HCT116 (cell line): ENCODE measurements at regions of chr20 and their contacts with region 1.

Region 1: GRCh38 chr20:8722276-8722928 is 346.5 kb upstream of the PLCB4 start:
- DNase-seq: peak; percentile 59
- ATAC-seq: peak; percentile 91
- H3K4me3 ChIP-seq: no peak overlapping the region
- H3K27ac ChIP-seq: no peak overlapping the region
- H3K4me1 ChIP-seq: no peaks in the 10 kb centered on the region
- H3K27me3 ChIP-seq: no peaks in the 10 kb centered on the region
- CTCF ChIP-seq: peak; percentile 52 to 83 (median 71); a peak in 5 of 6 replicates
- POLR2A ChIP-seq: no peak
- RAD21 ChIP-seq: peak; percentile 82

Region 2: DNA sequence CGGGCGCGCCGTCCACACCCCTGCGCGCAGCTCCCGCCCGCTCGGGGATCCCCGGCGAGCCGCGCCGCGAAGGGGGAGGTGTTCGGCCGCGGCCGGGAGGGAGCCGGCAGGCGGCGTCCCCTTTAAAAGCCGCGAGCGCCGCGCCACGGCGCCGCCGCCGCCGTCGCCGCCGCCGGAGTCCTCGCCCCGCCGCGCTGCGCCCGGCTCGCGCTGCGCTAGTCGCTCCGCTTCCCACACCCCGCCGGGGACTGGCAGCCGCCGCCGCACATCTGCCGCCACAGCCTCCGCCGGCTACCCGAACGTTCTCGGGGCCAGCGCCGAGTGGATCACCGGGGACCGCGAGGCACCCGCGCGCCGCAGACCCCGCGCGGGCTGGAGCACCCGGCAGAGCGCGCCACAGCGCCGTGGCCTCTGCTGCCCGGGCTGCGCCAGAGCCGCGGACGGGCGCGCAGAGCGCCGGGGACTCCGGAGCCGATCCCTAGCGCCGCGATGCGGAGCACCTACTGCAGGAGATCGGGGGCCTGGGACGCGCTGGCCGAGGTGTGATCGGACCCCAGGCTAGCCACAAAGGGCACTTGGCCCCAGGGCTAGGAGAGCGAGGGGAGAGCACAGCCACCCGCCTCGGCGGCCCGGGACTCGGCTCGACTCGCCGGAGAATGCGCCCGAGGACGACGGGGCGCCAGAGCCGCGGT is 1954.7 kb before region 1 on chr20 and contains the start of gene BMP2:
- CTCF ChIA-PET with region 1: no interaction called
- POLR2A ChIA-PET with region 1: no interaction called
- RAD21 ChIA-PET with region 1: no interaction called
- intact Hi-C with region 1: loop called (anchors 10 kb)
- DNase-seq: no peak
- ATAC-seq: no peak
- H3K4me3 ChIP-seq: no peak within 1 kb of the TSS
- H3K27ac ChIP-seq: no peak within 1 kb of the TSS
- H3K4me1 ChIP-seq: no peaks in the 10 kb centered on the region
- H3K27me3 ChIP-seq: no peaks in the 10 kb centered on the region
- CTCF ChIP-seq: no peak
- POLR2A ChIP-seq: no peak
- RAD21 ChIP-seq: no peak
- total RNA-seq, gene BMP2: 0.15 TPM

Region 3: GRCh38 chr20:7980332-7981046 is 741.9 kb before region 1 on chr20:
- CTCF ChIA-PET with region 1: interaction called, 54 read pairs
- POLR2A ChIA-PET with region 1: no interaction called
- RAD21 ChIA-PET with region 1: interaction called in 1 of 2 experiments, 5 read pairs
- intact Hi-C with region 1: loop called (anchors 1 kb)
- DNase-seq: peak; percentile 23
- ATAC-seq: peak; percentile 91
- H3K4me3 ChIP-seq: no peak overlapping the region
- H3K27ac ChIP-seq: no peak overlapping the region
- H3K4me1 ChIP-seq: peaks cover 0 to 5% of the 10 kb centered on the region in 2 experiments; a peak in 1 of 4 replicates
- H3K27me3 ChIP-seq: no peaks in the 10 kb centered on the region
- CTCF ChIP-seq: peak; percentile 26 to 69 (median 59); a peak in 4 of 6 replicates
- POLR2A ChIP-seq: no peak
- RAD21 ChIP-seq: peak; percentile 50

Region 4: DNA sequence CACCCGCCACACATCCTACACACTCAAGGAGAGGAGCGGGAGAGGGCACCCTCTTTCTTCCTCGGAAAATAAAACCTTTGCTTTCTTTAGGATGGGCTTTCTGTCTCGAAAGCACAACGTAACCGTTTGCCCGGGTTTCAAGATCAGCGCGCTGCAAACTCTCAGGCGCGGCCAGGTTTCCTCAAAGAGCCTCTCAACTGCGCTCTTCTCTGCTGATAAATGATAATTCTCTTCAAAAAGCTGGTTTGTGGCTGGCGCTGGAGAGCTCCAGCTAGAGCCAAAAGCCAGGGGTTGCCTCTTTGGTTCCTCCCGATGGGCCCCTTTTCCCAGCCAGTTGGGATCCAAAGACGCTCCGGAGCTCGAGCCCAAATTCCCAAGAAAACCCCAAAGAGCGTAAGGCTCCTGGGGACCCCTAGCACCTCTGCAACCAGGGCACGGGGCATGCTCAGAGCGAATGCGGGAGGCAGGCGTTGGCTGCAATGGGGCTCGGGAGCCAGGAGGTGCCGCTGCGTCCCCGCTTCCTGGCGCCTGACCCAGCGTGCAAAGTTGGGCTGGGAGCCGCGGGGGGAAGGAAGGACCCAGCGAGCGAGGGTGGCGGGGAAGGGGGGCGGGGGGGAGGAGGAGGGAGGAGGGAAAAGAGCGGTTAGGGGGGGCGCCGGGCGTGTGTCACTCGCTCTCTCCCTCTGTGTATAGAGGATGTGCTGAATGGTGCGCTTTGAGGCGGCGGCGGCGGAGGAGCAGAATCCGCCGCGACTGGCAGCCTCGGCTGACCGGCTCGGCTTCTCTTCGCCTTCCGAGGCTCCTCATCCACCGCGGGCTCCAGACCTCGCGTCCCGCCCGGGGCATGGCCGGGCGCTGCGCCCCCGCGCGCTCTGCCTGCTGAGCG is 590.6 kb before region 1 on chr20 and contains the start of gene PLCB1:
- CTCF ChIA-PET with region 1: interaction called, 14 read pairs
- POLR2A ChIA-PET with region 1: no interaction called
- RAD21 ChIA-PET with region 1: no interaction called
- intact Hi-C with region 1: loop called (anchors 1 kb)
- DNase-seq: peak; percentile 13
- ATAC-seq: peak; percentile 99
- H3K4me3 ChIP-seq: peak within 1 kb of the TSS; percentile 33 to 53
- H3K27ac ChIP-seq: no peak within 1 kb of the TSS
- H3K4me1 ChIP-seq: peaks cover 0 to 5% of the 10 kb centered on the region in 2 experiments; a peak in 2 of 4 replicates
- H3K27me3 ChIP-seq: no peaks in the 10 kb centered on the region
- CTCF ChIP-seq: peak; percentile 45 to 78 (median 59); a peak in 4 of 6 replicates
- POLR2A ChIP-seq: no peak
- RAD21 ChIP-seq: peak; percentile 75
- total RNA-seq, gene PLCB1: 15.8 TPM

Region 5: GRCh38 chr20:8389381-8390036 is 332.9 kb before region 1 on chr20:
- CTCF ChIA-PET with region 1: interaction called, 6 read pairs
- POLR2A ChIA-PET with region 1: no interaction called
- RAD21 ChIA-PET with region 1: no interaction called
- intact Hi-C with region 1: loop called (anchors 5 kb)
- DNase-seq: peak; percentile 23
- ATAC-seq: peak; percentile 55
- H3K4me3 ChIP-seq: no peak overlapping the region
- H3K27ac ChIP-seq: no peak overlapping the region
- H3K4me1 ChIP-seq: no peaks in the 10 kb centered on the region
- H3K27me3 ChIP-seq: no peaks in the 10 kb centered on the region
- CTCF ChIP-seq: peak in 2 of 3 experiments; percentile 33 to 64; a peak in 3 of 6 replicates
- POLR2A ChIP-seq: no peak
- RAD21 ChIP-seq: peak; percentile 37

Region 6: DNA sequence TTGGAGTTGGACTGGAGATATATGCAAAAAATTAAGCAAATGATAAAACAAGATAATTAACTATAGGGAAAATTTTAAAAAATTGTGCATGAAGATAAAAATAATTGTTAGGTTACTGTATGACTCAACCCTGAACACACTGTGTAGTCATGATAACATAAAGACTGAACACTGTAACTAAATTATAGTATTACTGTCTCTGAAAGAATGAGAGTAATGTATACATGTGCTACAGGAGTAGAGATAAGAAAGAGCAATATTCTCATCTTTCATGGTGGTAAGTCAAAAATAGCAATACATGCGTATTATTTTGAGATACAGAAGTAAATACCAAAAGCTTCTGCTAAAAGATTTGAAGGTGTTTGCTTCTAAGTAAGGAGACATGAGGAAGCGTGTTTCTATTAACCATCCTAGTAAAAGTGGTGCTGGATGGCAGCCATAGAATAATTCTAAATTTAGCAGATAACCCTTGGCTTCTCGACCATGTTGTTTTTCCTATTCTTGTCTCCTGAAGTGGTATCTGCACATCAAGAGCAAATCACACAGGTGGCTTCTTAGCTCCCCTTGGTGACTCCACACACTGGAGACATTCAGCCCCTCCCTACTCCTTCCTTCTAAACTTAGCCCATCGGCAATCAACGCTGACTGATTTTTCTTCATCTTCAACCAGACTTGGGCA is 44.2 kb before region 1 on chr20:
- CTCF ChIA-PET with region 1: no interaction called
- POLR2A ChIA-PET with region 1: no interaction called
- RAD21 ChIA-PET with region 1: no interaction called
- intact Hi-C with region 1: no loop called
- DNase-seq: no peak
- ATAC-seq: no peak
- H3K4me3 ChIP-seq: no peak overlapping the region
- H3K27ac ChIP-seq: no peak overlapping the region
- H3K4me1 ChIP-seq: no peaks in the 10 kb centered on the region
- H3K27me3 ChIP-seq: no peaks in the 10 kb centered on the region
- CTCF ChIP-seq: no peak
- POLR2A ChIP-seq: no peak
- RAD21 ChIP-seq: no peak

Region 7: GRCh38 chr20:8735674-8736073 is 13.3 kb after region 1 on chr20:
- CTCF ChIA-PET with region 1: interaction called, 10 read pairs
- POLR2A ChIA-PET with region 1: no interaction called
- RAD21 ChIA-PET with region 1: no interaction called
- intact Hi-C with region 1: no loop called
- DNase-seq: no peak
- ATAC-seq: no peak
- H3K4me3 ChIP-seq: no peak overlapping the region
- H3K27ac ChIP-seq: no peak overlapping the region
- H3K4me1 ChIP-seq: no peaks in the 10 kb centered on the region
- H3K27me3 ChIP-seq: no peaks in the 10 kb centered on the region
- CTCF ChIP-seq: no peak
- POLR2A ChIP-seq: no peak
- RAD21 ChIP-seq: no peak

Region 8: GRCh38 chr20:8842525-8842924 is 120.1 kb after region 1 on chr20:
- CTCF ChIA-PET with region 1: no interaction called
- POLR2A ChIA-PET with region 1: no interaction called
- RAD21 ChIA-PET with region 1: no interaction called
- intact Hi-C with region 1: no loop called
- DNase-seq: no peak
- ATAC-seq: no peak
- H3K4me3 ChIP-seq: no peak overlapping the region
- H3K27ac ChIP-seq: no peak overlapping the region
- H3K4me1 ChIP-seq: no peaks in the 10 kb centered on the region
- H3K27me3 ChIP-seq: no peaks in the 10 kb centered on the region
- CTCF ChIP-seq: no peak
- POLR2A ChIP-seq: no peak
- RAD21 ChIP-seq: no peak